Esophagus muscularis mucosa (tissue), 4 donors: ENCODE measurements at regions of chr17 and their contacts with region 1.

Region 1: GRCh38 chr17:63774969-63775265 is 947 bp downstream of the DDX42 start:
- DNase-seq: no peak
- H3K4me3 ChIP-seq: peak overlapping the region; percentile 77 to 97 (median 82)
- H3K27ac ChIP-seq: peak overlapping the region; percentile 94 to 98 (median 97)
- H3K4me1 ChIP-seq: peaks cover 39 to 79% (median 69%) of the 10 kb centered on the region in 4 donors
- H3K27me3 ChIP-seq: no peaks in the 10 kb centered on the region
- CTCF ChIP-seq: no peak
- EP300 ChIP-seq: no peak
- POLR2A ChIP-seq: no peak

Region 2: DNA sequence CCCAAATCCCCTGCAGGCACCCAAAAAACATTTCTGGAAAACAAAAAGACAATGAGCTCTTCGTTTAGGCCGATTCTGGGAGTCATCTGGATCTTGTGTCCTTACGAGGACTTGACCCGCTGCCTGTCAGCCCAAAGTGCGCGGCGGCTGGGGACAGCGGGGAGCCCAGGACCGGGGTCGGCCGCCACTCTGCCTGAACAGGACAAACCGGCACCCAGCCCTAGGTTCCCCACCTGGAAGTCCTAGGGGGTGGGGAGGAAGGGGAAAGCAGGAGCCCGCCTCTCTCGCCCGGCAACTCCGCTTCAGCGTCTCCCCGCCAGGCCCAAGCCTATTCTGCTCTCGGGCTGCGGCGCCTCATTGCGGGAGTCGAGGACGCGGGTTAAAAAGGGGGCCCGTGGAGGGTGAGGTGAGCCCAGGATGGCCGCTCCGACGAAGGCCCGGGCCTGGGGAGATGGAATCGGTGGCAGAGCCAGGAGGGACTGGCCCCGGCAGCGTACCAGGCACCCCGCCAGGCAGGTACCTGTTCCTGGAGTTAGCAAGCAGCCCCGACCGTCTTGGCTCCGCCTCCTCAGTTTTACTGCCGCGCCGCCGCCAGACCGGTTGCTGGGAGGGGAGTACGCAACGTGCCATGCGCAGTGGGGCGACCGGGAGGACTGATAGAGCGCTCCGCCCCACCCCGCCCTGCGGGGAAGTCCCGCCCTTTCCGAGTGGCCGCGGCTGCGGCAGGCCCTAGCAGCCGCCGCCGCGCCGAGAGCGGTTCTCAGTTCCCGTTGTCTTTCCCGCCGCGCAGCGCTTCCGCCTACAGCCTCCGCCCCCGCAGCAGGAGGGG is 33.5 kb before region 1 on chr17 and contains the start of gene STRADA:
- intact Hi-C with region 1: loop called (anchors 5 kb)
- DNase-seq: peak; percentile 99
- H3K4me3 ChIP-seq: peak within 1 kb of the TSS; percentile 75 to 91 (median 88)
- H3K27ac ChIP-seq: peak within 1 kb of the TSS; percentile 90 to 99 (median 94)
- H3K4me1 ChIP-seq: peaks cover 15 to 29% (median 18%) of the 10 kb centered on the region in 4 donors
- H3K27me3 ChIP-seq: no peaks in the 10 kb centered on the region
- CTCF ChIP-seq: no peak
- EP300 ChIP-seq: no peak
- POLR2A ChIP-seq: peak; percentile 36
- total RNA-seq, gene STRADA: 18.2 to 20.5 (median 20.1) TPM

Region 3: GRCh38 chr17:63827002-63827771 is 52.3 kb after region 1 on chr17 and contains the starts of genes FTSJ3 and PSMC5:
- intact Hi-C with region 1: loop called (anchors 5 kb)
- DNase-seq: peak; percentile 99
- H3K4me3 ChIP-seq: peak within 1 kb of the TSS; percentile 82 to 92 (median 87)
- H3K27ac ChIP-seq: peak within 1 kb of the TSS; percentile 88 to 94 (median 90)
- H3K4me1 ChIP-seq: peaks cover 23 to 48% (median 39%) of the 10 kb centered on the region in 4 donors
- H3K27me3 ChIP-seq: no peaks in the 10 kb centered on the region
- CTCF ChIP-seq: peak; percentile 14 to 55 (median 36)
- EP300 ChIP-seq: no peak
- POLR2A ChIP-seq: peak; percentile 66
- total RNA-seq, gene FTSJ3: 46.8 to 72.4 (median 56.2) TPM
- total RNA-seq, gene PSMC5: 71.2 to 117 (median 92.1) TPM

Region 4: GRCh38 chr17:64081802-64082799 is 307.2 kb after region 1 on chr17:
- intact Hi-C with region 1: no loop called
- DNase-seq: no peak
- H3K4me3 ChIP-seq: no peak overlapping the region
- H3K27ac ChIP-seq: no peak overlapping the region
- H3K4me1 ChIP-seq: peaks cover 4 to 22% (median 4%) of the 10 kb centered on the region in 4 donors
- H3K27me3 ChIP-seq: no peaks in the 10 kb centered on the region
- CTCF ChIP-seq: no peak
- EP300 ChIP-seq: no peak
- POLR2A ChIP-seq: no peak